Posterior cingulate gyrus (tissue), 11 donors: ENCODE measurements at regions of chr3 and their contacts with region 1.

Region 1: GRCh38 chr3:128153156-128154041 is at the start of gene EEFSEC:
- DNase-seq: peak; percentile 64 to 97 (median 82)

Region 2: DNA sequence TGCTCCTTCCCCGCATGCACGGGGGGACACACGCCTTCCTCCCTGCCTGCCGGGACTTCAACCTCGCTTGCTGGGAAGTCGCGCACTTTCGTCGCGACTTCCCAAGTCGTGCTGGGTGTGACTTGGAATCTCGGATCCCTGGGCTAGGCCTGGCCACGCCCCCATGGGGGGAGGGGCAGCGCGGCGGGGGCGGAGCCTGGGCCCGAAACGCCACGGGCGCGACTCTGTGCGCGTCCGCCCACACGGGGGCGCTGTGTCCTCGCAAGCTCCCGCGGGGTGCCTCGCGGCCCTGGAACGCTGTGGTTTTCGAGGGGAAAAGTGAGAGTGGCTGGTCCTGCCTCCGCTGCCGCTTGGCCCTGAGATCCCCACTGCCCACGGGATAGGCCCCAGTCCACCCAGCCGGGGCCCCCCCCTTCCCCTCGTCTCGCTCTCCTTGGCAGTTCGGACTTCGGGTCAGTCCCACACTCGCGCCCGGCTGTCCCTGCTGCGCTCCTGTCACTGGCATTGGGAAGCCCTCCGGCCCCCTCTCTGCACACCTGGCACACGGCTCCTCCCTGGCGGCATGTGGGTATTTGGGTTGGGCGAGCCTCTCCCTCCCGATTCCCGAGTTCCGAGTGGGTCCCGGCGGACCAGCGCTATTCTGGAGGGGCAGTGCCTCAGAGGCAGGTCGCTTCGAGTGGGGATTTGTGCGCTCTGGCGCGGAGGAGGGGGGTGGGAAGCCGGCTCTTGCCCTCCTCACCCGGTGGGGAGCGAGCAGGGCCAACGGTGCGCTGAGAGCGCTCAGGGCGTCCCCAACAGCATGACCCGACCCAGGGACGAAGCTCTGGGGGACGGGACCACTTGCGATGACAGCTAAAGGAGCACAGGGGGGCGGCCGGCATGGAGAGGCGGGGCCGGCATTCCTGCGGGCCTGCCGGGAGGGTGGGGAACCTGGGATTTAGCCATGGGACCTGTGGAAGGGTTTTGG is 77.6 kb before region 1 on chr3:
- intact Hi-C with region 1: loop called (anchors 10 kb)
- DNase-seq: peak; percentile 79 to 99 (median 92)

Region 3: GRCh38 chr3:128123538-128124368 is 29.6 kb before region 1 on chr3 and contains the start of gene RUVBL1:
- intact Hi-C with region 1: loop called (anchors 1 kb)
- DNase-seq: peak; percentile 95 to 100 (median 98)

Region 4: DNA sequence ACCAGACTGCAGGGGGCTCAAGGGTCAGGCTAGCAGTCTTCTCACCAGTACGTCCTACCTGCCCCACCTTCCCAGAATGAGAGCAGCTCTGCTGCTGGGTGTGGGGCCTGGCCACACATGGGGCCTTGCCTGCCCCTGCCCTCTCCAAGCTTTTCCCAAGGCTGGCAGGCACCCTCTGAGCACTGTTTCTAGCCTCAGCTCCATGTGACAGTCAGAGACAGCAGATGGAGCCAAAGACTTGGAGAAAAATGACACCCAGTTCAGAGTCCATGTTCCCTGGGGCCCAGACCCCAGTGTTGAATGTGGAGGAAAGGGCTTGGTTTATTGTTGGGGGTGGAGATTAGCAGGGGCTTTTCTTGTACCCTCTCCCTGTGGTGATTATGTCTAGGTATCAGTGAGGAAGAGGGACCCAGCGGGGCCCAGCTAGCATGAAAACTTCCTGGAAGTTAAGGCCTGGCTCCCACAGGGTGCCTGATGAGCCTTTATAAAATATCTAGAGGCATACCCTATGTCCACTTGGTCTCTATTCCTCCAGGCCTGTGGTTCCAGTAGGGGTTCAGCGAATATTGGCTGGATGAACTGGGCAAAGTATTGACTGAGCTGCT is 153.7 kb after region 1 on chr3:
- intact Hi-C with region 1: no loop called
- DNase-seq: no peak